Heart right ventricle (tissue), 16 donors: ENCODE measurements at regions of chr15 and their contacts with region 1.

Region 1: GRCh38 chr15:38308797-38309196 is 56.2 kb downstream of the SPRED1 start:
- DNase-seq: no peak
- ATAC-seq: no peak
- H3K4me3 ChIP-seq: no peak overlapping the region
- H3K27ac ChIP-seq: no peak overlapping the region
- H3K4me1 ChIP-seq: peaks cover 0 to 29% (median 5%) of the 10 kb centered on the region in 9 donors
- H3K27me3 ChIP-seq: no peaks in the 10 kb centered on the region
- CTCF ChIP-seq: no peak

Region 2: DNA sequence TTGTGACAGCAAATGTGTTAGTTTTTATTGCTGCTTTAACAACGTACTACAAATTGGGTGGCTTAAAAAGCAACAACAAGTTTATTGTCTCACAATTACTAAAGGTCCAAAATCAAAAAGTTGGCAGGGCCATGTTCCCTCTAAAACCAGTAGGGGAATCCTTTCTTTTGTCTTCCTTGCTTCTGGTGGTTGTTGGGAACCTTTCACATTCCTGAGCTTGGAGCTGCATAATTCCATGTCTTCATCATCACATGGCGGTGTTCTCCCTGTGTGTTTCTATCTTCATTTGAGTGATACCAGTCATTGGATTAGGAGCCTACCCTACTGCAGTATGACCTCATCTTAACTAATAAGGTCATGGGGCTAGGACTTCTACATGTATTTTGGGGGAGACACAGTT is 48.7 kb before region 1 on chr15:
- intact Hi-C with region 1: loop called in 3 of 10 experiments (anchors 5 to 10 kb)
- DNase-seq: no peak
- ATAC-seq: no peak
- H3K4me3 ChIP-seq: no peak overlapping the region
- H3K27ac ChIP-seq: no peak overlapping the region
- H3K4me1 ChIP-seq: peaks cover 0 to 93% (median 63%) of the 10 kb centered on the region in 9 donors
- H3K27me3 ChIP-seq: no peaks in the 10 kb centered on the region
- CTCF ChIP-seq: no peak

Region 3: DNA sequence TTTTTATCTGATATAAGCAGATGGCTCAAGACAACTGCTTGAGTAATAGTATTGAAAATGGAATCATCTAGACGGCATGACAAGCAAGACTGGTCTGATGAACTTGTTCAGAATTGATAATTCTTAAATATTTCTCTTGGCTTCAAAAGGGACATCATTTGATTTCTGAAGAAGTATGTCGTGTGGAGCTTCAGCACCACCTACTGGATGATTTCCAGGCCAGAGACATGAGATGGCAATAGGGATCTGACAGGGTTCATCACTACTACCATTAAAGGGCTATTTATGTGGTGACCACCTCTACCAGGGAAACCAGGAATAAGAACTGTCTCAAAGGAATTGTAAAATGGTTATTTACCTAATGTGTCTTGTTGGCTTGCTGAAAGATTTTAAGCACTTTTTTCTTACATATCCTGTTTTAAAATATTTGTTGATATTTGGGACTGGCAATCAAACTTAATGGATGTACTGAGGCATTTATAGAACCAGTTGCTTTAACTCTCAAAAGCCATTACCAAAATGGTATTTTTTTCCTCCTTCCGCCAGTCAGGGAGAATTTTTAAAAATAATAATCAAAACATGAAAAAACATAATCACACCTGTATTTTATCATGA is 45.6 kb after region 1 on chr15:
- intact Hi-C with region 1: no loop called
- DNase-seq: peak in 1 of 2 donors; percentile 70
- ATAC-seq: peak in 7 of 8 donors; percentile 47 to 83 (median 70)
- H3K4me3 ChIP-seq: no peak overlapping the region
- H3K27ac ChIP-seq: no peak overlapping the region
- H3K4me1 ChIP-seq: peaks cover 0 to 5% (median 0%) of the 10 kb centered on the region in 9 donors
- H3K27me3 ChIP-seq: no peaks in the 10 kb centered on the region
- CTCF ChIP-seq: peak; percentile 73 to 90 (median 82)